Activated B cell treated with CpG ODN at 0.5 μM for 24 hours (primary cell): ENCODE measurements at regions of chr6 and their contacts with region 1.

Region 1: GRCh38 chr6:32741031-32741960 is at the start of gene HLA-DQA2:
- DNase-seq: peak; percentile 41
- ATAC-seq: peak; percentile 99
- H3K4me3 Mint-ChIP-seq: peak within 1 kb of the TSS; percentile 81
- H3K27ac Mint-ChIP-seq: peak within 1 kb of the TSS; percentile 83
- H3K4me1 Mint-ChIP-seq: peaks cover 6% of the 10 kb centered on the region
- H3K27me3 Mint-ChIP-seq: peaks cover 19% of the 10 kb centered on the region
- CTCF ChIP-seq: no peak
- total RNA-seq, gene HLA-DQA2: 231 and 237 TPM in 2 replicates

Region 2: DNA sequence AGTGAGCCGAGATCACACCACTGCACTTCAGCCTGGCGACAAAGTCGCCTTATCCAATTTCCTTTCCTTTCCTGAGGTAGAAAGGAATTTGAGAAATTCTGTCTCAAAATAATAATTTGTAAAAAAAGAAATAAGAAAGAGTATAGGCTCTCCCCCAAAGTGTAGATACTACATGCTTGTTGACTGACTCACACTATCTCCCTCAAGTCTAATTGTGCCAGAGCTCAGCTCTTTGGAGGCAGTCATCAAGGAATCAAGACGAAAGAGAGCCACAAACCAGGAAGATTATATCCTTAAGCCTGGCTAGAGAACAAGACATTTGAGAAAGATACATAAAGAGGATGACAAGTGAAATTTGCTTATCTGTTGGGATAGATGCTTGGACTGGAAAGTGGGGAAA is 607.5 kb before region 1 on chr6:
- CTCF ChIA-PET with region 1: no interaction called
- POLR2A ChIA-PET with region 1: interaction called, 14 read pairs
- intact Hi-C with region 1: no loop called
- DNase-seq: no peak
- ATAC-seq: no peak
- H3K4me3 Mint-ChIP-seq: no peak overlapping the region
- H3K27ac Mint-ChIP-seq: no peak overlapping the region
- H3K4me1 Mint-ChIP-seq: peaks cover 16% of the 10 kb centered on the region
- H3K27me3 Mint-ChIP-seq: no peaks in the 10 kb centered on the region
- CTCF ChIP-seq: no peak

Region 3: GRCh38 chr6:32642720-32643106 is 98.6 kb before region 1 on chr6:
- CTCF ChIA-PET with region 1: no interaction called
- POLR2A ChIA-PET with region 1: interaction called, 68 read pairs
- intact Hi-C with region 1: no loop called
- DNase-seq: no peak
- ATAC-seq: no peak
- H3K4me3 Mint-ChIP-seq: peak overlapping the region; percentile 100
- H3K27ac Mint-ChIP-seq: peak overlapping the region; percentile 77
- H3K4me1 Mint-ChIP-seq: peaks cover 61% of the 10 kb centered on the region
- H3K27me3 Mint-ChIP-seq: no peaks in the 10 kb centered on the region
- CTCF ChIP-seq: no peak

Region 4: DNA sequence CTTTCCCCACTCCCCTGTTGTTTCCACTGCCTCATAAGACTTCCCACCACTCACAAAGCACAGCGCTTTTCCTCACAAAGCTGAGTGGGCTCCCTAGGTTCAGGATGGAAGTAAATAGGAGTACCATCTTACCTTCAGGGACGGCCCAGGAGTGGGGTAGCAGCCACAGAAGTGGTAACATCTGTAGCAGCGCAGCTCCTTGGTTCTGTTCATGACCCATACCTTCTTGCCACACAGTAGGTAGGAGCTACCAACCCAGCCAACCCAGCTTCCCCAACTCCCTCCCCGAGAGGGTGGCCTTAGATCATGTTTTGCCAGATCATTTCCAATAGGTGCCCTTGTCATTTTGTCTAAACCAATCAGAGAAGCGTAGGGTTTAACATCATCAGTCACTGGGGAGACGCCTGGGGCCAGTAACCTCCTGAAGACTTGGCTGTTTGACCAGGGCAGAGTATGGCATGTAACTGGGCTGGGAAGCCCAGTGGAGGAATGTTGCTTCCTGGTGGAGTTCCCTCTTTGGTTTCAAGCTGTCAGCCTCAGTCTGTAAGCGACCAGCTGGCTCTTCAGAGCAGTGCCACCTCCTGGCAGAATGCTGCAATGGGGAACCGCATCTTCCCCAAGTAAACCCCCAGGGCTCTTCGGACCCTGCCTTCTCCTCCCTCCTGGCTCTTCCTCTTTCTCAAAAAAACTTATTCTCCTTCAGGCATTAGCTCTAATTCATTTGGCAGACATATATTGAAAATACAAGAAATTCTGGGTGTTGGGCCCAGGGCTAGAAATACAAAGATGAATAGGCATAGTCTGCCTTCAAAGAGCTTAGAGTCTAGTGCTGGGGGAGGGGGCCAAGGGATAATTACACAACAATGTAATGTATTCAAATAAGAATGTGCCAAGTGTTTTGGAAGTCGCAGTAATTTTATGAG is 211.8 kb after region 1 on chr6 and contains the start of gene HLA-DMA:
- CTCF ChIA-PET with region 1: no interaction called
- POLR2A ChIA-PET with region 1: no interaction called
- intact Hi-C with region 1: no loop called
- DNase-seq: peak; percentile 65
- ATAC-seq: peak; percentile 91
- H3K4me3 Mint-ChIP-seq: peak within 1 kb of the TSS; percentile 98
- H3K27ac Mint-ChIP-seq: peak within 1 kb of the TSS; percentile 97
- H3K4me1 Mint-ChIP-seq: peaks cover 85% of the 10 kb centered on the region
- H3K27me3 Mint-ChIP-seq: no peaks in the 10 kb centered on the region
- CTCF ChIP-seq: no peak
- total RNA-seq, gene HLA-DMA: 371 and 387 TPM in 2 replicates

Region 5: GRCh38 chr6:33288921-33289748 is 547.8 kb after region 1 on chr6 and contains the starts of genes PFDN6 and WDR46:
- CTCF ChIA-PET with region 1: no interaction called
- POLR2A ChIA-PET with region 1: no interaction called
- intact Hi-C with region 1: no loop called
- DNase-seq: peak; percentile 66
- ATAC-seq: peak; percentile 94
- H3K4me3 Mint-ChIP-seq: peak within 1 kb of the TSS; percentile 100
- H3K27ac Mint-ChIP-seq: peak within 1 kb of the TSS; percentile 95
- H3K4me1 Mint-ChIP-seq: peaks cover 48% of the 10 kb centered on the region
- H3K27me3 Mint-ChIP-seq: no peaks in the 10 kb centered on the region
- CTCF ChIP-seq: no peak
- total RNA-seq, gene PFDN6: 82.8 and 95.1 TPM in 2 replicates
- total RNA-seq, gene WDR46: 114 and 117 TPM in 2 replicates

Region 6: GRCh38 chr6:34595332-34596184 is 1854.3 kb after region 1 on chr6:
- CTCF ChIA-PET with region 1: no interaction called
- POLR2A ChIA-PET with region 1: no interaction called
- intact Hi-C with region 1: no loop called
- DNase-seq: no peak
- ATAC-seq: no peak
- H3K4me3 Mint-ChIP-seq: no peak overlapping the region
- H3K27ac Mint-ChIP-seq: no peak overlapping the region
- H3K4me1 Mint-ChIP-seq: peaks cover 60% of the 10 kb centered on the region
- H3K27me3 Mint-ChIP-seq: no peaks in the 10 kb centered on the region
- CTCF ChIP-seq: no peak